Transverse colon (tissue), 4 donors: ENCODE measurements at regions of chr7 and their contacts with region 1.

Region 1: DNA sequence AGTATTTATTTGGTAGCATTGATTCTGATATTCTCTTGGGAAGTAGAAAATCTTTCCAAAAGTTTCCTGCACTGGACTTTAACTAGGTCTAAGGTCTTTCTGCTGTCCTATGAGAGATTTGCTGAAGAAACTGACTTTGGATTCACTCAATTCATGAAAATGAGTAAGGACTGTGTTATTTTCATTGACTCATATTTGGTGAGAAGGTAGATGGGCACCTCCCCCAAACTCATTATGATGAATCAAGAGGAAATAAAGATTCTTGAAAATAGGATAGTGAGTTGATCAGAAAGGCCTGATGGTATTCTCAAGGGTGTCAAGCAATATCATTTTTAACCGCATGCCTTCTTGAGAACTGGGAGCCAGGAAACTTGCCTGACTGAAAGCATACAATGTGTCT is 110.3 kb downstream of the RNF133 start:
- DNase-seq: no peak
- H3K4me3 ChIP-seq: no peak overlapping the region
- H3K27ac ChIP-seq: no peak overlapping the region
- H3K4me1 ChIP-seq: no peaks in the 10 kb centered on the region
- H3K27me3 ChIP-seq: no peaks in the 10 kb centered on the region
- CTCF ChIP-seq: no peak
- EP300 ChIP-seq: no peak
- POLR2A ChIP-seq: no peak

Region 2: DNA sequence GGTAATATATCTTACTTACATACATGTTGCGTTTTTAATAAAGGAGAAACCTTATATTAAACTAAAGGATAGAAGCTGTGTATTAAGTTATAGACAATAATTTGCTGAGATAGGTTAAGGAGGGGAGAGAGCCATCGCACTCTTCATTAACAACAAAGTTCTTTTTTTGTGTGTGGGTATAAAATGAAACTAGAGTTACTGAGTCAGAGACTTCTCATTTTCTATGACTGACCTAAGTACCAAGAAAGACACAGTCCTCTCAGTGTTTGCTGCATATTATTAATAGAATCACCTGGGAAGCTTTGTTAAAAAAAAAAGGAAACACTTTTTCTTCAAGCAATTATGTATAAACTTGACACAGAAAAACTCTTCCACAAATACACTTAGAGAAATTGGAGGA is 315.5 kb before region 1 on chr7:
- in situ Hi-C with region 1: no loop called
- intact Hi-C with region 1: no loop called
- DNase-seq: no peak
- H3K4me3 ChIP-seq: no peak overlapping the region
- H3K27ac ChIP-seq: no peak overlapping the region
- H3K4me1 ChIP-seq: no peaks in the 10 kb centered on the region
- H3K27me3 ChIP-seq: no peaks in the 10 kb centered on the region
- CTCF ChIP-seq: no peak
- EP300 ChIP-seq: no peak
- POLR2A ChIP-seq: no peak

Region 3: GRCh38 chr7:122675016-122675415 is 86.4 kb after region 1 on chr7:
- in situ Hi-C with region 1: loop called in 1 of 4 experiments (anchors 25 kb)
- intact Hi-C with region 1: no loop called
- DNase-seq: no peak
- H3K4me3 ChIP-seq: no peak overlapping the region
- H3K27ac ChIP-seq: no peak overlapping the region
- H3K4me1 ChIP-seq: peaks cover 0 to 5% (median 0%) of the 10 kb centered on the region in 4 donors
- H3K27me3 ChIP-seq: no peaks in the 10 kb centered on the region
- CTCF ChIP-seq: no peak
- EP300 ChIP-seq: no peak
- POLR2A ChIP-seq: no peak